Activated naive CD4-positive, alpha-beta T cell treated with anti-CD3 and anti-CD28 coated beads for 36 hours (primary cell): ENCODE measurements at regions of chr2 and their contacts with region 1.

Region 1: GRCh38 chr2:174748948-174749347 is 15.3 kb downstream of the CHRNA1 start:
- DNase-seq: peak; percentile 87
- H3K4me3 Mint-ChIP-seq: no peak overlapping the region
- H3K27ac Mint-ChIP-seq: no peak overlapping the region
- H3K4me1 Mint-ChIP-seq: peaks cover 34% of the 10 kb centered on the region
- H3K27me3 Mint-ChIP-seq: no peaks in the 10 kb centered on the region

Region 2: DNA sequence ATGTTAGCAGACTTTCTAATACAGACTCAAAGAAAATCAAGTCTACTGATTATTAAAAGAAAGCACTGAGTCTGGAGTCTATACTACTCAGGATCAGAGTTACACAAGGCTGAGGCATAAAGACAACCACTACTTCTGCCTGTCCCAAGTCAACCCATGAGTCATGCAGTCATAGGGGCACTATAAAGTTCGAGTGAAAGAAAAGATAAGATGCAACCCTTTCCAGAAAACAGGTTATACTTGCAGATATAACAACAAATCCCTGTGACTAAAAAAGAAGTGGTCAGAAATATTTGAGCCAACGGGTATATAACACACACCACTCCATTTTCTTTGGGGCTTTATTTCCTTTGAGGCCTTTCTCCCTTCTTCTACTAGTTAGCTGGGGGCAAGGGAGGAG is 372.0 kb before region 1 on chr2:
- CTCF ChIA-PET with region 1: no interaction called
- intact Hi-C with region 1: no loop called
- DNase-seq: no peak
- H3K4me3 Mint-ChIP-seq: no peak overlapping the region
- H3K27ac Mint-ChIP-seq: no peak overlapping the region
- H3K4me1 Mint-ChIP-seq: no peaks in the 10 kb centered on the region
- H3K27me3 Mint-ChIP-seq: no peaks in the 10 kb centered on the region

Region 3: GRCh38 chr2:174615871-174616436 is 133.0 kb before region 1 on chr2:
- CTCF ChIA-PET with region 1: no interaction called
- intact Hi-C with region 1: no loop called
- DNase-seq: no peak
- H3K4me3 Mint-ChIP-seq: no peak overlapping the region
- H3K27ac Mint-ChIP-seq: peak overlapping the region; percentile 65
- H3K4me1 Mint-ChIP-seq: peaks cover 84% of the 10 kb centered on the region
- H3K27me3 Mint-ChIP-seq: no peaks in the 10 kb centered on the region

Region 4: GRCh38 chr2:174697255-174697654 is 51.7 kb before region 1 on chr2:
- CTCF ChIA-PET with region 1: interaction called, 37 read pairs
- intact Hi-C with region 1: loop called (anchors 1 kb)
- DNase-seq: peak; percentile 80
- H3K4me3 Mint-ChIP-seq: no peak overlapping the region
- H3K27ac Mint-ChIP-seq: no peak overlapping the region
- H3K4me1 Mint-ChIP-seq: no peaks in the 10 kb centered on the region
- H3K27me3 Mint-ChIP-seq: no peaks in the 10 kb centered on the region

Region 5: DNA sequence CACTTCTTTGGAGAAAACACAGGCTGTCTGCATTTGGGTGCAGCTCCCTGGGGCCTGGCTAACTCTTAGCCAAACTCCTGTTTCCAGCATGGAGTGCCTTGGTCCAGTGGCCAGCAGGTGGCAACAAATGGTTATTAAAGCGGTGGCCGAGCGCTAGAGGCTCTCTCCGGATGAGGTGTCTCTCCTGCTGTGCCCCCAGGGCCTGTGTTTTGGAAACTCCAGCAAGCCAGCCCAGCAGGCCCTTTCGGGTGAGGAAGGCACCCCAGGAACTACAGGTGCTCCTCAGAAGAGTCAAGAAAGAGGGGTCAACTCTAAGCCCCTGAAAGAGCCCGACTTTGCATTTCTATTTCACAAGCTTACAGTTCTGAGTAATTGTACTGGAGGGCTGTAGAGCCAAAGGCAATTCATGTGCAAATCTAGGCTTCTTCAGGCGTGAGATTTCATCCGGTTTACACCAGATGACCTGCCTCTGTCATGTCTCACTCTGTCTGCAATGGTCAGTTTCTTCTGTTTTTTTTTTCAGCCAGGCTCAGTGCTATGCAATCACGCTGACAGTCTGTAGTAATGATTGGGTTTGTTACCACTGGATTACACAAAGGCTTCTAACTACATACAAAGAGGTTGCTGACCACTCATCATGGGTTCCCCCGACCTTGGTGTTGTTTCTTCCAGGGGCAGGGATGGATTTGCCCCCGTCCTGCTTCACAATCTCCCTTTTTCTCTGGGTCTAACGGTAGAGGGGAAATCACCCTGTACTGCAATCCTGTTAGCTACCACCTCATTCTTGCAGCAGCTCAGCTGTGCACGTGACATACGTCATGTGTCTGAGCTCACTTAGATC is 22.9 kb after region 1 on chr2:
- CTCF ChIA-PET with region 1: interaction called, 15 read pairs
- intact Hi-C with region 1: no loop called
- DNase-seq: peak; percentile 74
- H3K4me3 Mint-ChIP-seq: no peak overlapping the region
- H3K27ac Mint-ChIP-seq: no peak overlapping the region
- H3K4me1 Mint-ChIP-seq: peaks cover 13% of the 10 kb centered on the region
- H3K27me3 Mint-ChIP-seq: no peaks in the 10 kb centered on the region

Region 6: GRCh38 chr2:174835797-174836255 is 86.9 kb after region 1 on chr2:
- CTCF ChIA-PET with region 1: interaction called, 3 read pairs
- intact Hi-C with region 1: loop called (anchors 1 kb)
- DNase-seq: peak; percentile 38
- H3K4me3 Mint-ChIP-seq: peak overlapping the region; percentile 36
- H3K27ac Mint-ChIP-seq: peak overlapping the region; percentile 71
- H3K4me1 Mint-ChIP-seq: peaks cover 32% of the 10 kb centered on the region
- H3K27me3 Mint-ChIP-seq: no peaks in the 10 kb centered on the region

Region 7: DNA sequence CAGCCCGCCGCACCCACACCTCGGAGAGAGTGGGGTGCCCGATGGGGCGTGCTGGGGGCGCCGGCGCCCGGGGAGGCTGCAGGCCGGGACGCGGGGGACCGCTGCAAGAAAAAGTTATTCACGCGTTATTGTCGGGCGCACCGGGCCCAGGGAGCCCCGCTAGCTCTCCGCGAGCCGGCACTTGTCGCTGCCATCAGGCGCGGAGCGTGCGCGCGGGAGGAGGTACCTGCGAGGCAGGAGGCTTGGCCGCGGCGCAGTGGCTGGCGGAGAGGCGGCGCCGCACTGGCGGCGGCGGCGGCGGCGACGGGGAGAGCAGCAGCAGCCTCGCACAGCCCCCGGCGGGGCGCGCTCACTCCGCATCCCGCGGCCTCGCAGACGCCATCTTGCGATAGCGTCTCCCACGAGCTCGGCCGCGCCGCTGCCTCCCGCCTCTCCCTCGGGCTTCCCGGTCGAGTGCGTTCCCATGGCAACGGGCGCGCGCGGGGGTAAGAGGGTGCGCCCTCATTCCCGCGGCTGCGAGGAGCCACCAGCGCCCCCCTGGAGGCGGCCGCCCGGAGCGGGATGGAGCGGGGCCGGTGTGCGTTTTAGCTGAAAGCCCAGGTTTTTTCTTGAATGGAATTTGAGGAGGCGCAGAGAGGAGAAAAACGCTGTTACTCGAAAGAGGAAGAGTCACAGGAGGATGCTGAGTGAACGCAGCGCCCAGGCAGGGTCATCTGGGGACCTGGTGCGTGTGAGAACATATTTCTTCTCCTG is 256.2 kb after region 1 on chr2 and contains the start of gene CHN1:
- CTCF ChIA-PET with region 1: interaction called, 9 read pairs
- intact Hi-C with region 1: loop called (anchors 1 kb)
- DNase-seq: peak; percentile 67
- H3K4me3 Mint-ChIP-seq: peak within 1 kb of the TSS; percentile 83
- H3K27ac Mint-ChIP-seq: no peak within 1 kb of the TSS
- H3K4me1 Mint-ChIP-seq: peaks cover 11% of the 10 kb centered on the region
- H3K27me3 Mint-ChIP-seq: peaks cover 59% of the 10 kb centered on the region
- total RNA-seq, gene CHN1: 2.1 to 3.3 TPM

Region 8: GRCh38 chr2:175282290-175282689 is 533.3 kb after region 1 on chr2:
- CTCF ChIA-PET with region 1: no interaction called
- intact Hi-C with region 1: loop called (anchors 5 kb)
- DNase-seq: no peak
- H3K4me3 Mint-ChIP-seq: no peak overlapping the region
- H3K27ac Mint-ChIP-seq: no peak overlapping the region
- H3K4me1 Mint-ChIP-seq: no peaks in the 10 kb centered on the region
- H3K27me3 Mint-ChIP-seq: no peaks in the 10 kb centered on the region